CD4-positive, alpha-beta T cell (primary cell): ENCODE measurements at regions of chr7 and their contacts with region 1.

Region 1: DNA sequence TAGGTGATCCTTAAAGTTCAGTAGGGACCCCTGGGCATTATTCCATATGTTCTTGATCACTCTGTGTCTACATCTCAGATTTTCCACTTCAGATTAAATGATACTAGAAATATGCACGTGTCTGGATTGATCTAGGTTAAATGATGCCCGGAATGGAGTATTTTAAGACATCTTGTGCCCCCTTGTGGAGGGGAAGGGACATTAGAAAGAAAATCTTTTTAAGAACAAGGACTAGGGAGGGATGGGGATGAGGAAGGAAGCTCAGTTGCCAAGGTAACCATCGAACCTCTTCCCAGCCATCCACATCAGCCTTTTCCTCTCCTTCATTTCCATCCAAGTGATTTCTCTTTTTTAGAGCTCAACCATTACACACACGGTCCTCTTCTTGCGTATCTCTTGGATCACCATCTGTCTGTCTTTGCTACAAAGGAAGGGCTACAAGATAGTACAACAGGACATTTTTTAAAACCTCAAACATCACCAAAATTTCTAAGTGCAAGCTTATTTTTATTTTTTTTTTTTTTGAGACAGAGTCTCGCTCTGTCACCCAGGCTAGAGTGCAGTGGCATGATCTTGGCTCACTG is 40.5 kb downstream of the PRSS2 start:
- DNase-seq: peak in 4 of 14 experiments; percentile 59 to 87 (median 86)
- ATAC-seq: no peak
- H3K4me3 ChIP-seq: no peak overlapping the region
- H3K4me3 Mint-ChIP-seq: peak overlapping the region; percentile 62
- H3K27ac ChIP-seq: peak overlapping the region; percentile 95 to 99
- H3K27ac Mint-ChIP-seq: peak overlapping the region; percentile 98
- H3K4me1 ChIP-seq: peaks cover 77% of the 10 kb centered on the region
- H3K4me1 Mint-ChIP-seq: peaks cover 99% of the 10 kb centered on the region
- H3K27me3 ChIP-seq: no peaks in the 10 kb centered on the region
- H3K27me3 Mint-ChIP-seq: no peaks in the 10 kb centered on the region
- CTCF ChIP-seq: peak; percentile 78

Region 2: GRCh38 chr7:142384493-142384922 is 426.7 kb before region 1 on chr7:
- CTCF ChIA-PET with region 1: no interaction called
- POLR2A ChIA-PET with region 1: interaction called, 13 read pairs
- intact Hi-C with region 1: no loop called
- DNase-seq: peak in 9 of 14 experiments; percentile 8 to 63 (median 27)
- ATAC-seq: peak; percentile 77
- H3K4me3 ChIP-seq: peak overlapping the region; percentile 20
- H3K4me3 Mint-ChIP-seq: peak overlapping the region; percentile 9
- H3K27ac ChIP-seq: no peak overlapping the region
- H3K27ac Mint-ChIP-seq: peak overlapping the region; percentile 72
- H3K4me1 ChIP-seq: peaks cover 15% of the 10 kb centered on the region
- H3K4me1 Mint-ChIP-seq: peaks cover 26% of the 10 kb centered on the region
- H3K27me3 ChIP-seq: no peaks in the 10 kb centered on the region
- H3K27me3 Mint-ChIP-seq: no peaks in the 10 kb centered on the region
- CTCF ChIP-seq: no peak

Region 3: GRCh38 chr7:142535123-142535779 is 276.0 kb before region 1 on chr7:
- CTCF ChIA-PET with region 1: interaction called, 11 read pairs
- POLR2A ChIA-PET with region 1: interaction called, 23 read pairs
- intact Hi-C with region 1: loop called in 1 of 2 experiments (anchors 2 kb)
- DNase-seq: peak; percentile 35 to 86 (median 66)
- ATAC-seq: peak; percentile 82
- H3K4me3 ChIP-seq: peak overlapping the region; percentile 15
- H3K4me3 Mint-ChIP-seq: peak overlapping the region; percentile 75
- H3K27ac ChIP-seq: peak overlapping the region; percentile 8 to 57
- H3K27ac Mint-ChIP-seq: peak overlapping the region; percentile 77
- H3K4me1 ChIP-seq: peaks cover 19% of the 10 kb centered on the region
- H3K4me1 Mint-ChIP-seq: peaks cover 41% of the 10 kb centered on the region
- H3K27me3 ChIP-seq: no peaks in the 10 kb centered on the region
- H3K27me3 Mint-ChIP-seq: no peaks in the 10 kb centered on the region
- CTCF ChIP-seq: peak; percentile 64

Region 4: DNA sequence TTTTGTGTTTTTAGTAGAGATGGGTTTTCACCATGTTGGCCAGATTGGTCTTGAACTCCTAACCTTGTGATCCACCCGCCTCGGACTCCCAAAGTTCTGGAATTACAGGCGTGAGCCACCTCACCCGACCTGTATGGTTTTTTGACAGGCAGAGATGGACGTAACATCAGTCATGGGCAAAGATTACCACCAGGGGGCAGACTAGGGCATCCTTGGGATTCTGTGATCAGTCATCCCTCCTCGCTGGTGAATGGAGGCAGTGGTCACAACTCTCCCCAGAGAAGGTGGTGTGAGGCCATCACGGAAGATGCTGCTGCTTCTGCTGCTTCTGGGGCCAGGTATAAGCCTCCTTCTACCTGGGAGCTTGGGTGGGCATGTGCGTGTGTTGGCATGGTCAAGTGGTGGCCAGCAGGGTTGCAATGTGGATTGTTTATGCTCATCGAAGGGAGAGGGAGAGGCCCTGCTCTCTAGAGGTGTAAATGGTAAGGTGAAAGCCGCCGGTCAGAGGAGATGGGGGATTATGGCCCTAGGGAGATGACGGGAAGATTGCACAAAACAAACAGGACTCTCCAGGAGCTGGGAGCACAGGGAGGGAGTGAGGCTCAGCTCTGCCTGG is 184.7 kb before region 1 on chr7:
- CTCF ChIA-PET with region 1: interaction called, 4 read pairs
- POLR2A ChIA-PET with region 1: interaction called, 195 read pairs
- intact Hi-C with region 1: no loop called
- DNase-seq: peak; percentile 54 to 82 (median 64)
- ATAC-seq: peak; percentile 94
- H3K4me3 ChIP-seq: peak overlapping the region; percentile 47
- H3K4me3 Mint-ChIP-seq: peak overlapping the region; percentile 89
- H3K27ac ChIP-seq: peak overlapping the region in 1 of 2 donors; percentile 7
- H3K27ac Mint-ChIP-seq: peak overlapping the region; percentile 90
- H3K4me1 ChIP-seq: no peaks in the 10 kb centered on the region
- H3K4me1 Mint-ChIP-seq: peaks cover 8% of the 10 kb centered on the region
- H3K27me3 ChIP-seq: no peaks in the 10 kb centered on the region
- H3K27me3 Mint-ChIP-seq: peaks cover 3% of the 10 kb centered on the region
- CTCF ChIP-seq: peak; percentile 54

Region 5: GRCh38 chr7:142788303-142789289 is 22.6 kb before region 1 on chr7:
- CTCF ChIA-PET with region 1: interaction called, 135 read pairs
- POLR2A ChIA-PET with region 1: interaction called, 5,733 read pairs
- intact Hi-C with region 1: loop called (anchors 1 kb)
- DNase-seq: peak in 5 of 14 experiments; percentile 13 to 45 (median 25)
- ATAC-seq: no peak
- H3K4me3 ChIP-seq: peak overlapping the region; percentile 91
- H3K4me3 Mint-ChIP-seq: peak overlapping the region; percentile 97
- H3K27ac ChIP-seq: peak overlapping the region; percentile 82 to 99
- H3K27ac Mint-ChIP-seq: peak overlapping the region; percentile 98
- H3K4me1 ChIP-seq: peaks cover 37% of the 10 kb centered on the region
- H3K4me1 Mint-ChIP-seq: peaks cover 38% of the 10 kb centered on the region
- H3K27me3 ChIP-seq: no peaks in the 10 kb centered on the region
- H3K27me3 Mint-ChIP-seq: no peaks in the 10 kb centered on the region
- CTCF ChIP-seq: no peak

Region 6: DNA sequence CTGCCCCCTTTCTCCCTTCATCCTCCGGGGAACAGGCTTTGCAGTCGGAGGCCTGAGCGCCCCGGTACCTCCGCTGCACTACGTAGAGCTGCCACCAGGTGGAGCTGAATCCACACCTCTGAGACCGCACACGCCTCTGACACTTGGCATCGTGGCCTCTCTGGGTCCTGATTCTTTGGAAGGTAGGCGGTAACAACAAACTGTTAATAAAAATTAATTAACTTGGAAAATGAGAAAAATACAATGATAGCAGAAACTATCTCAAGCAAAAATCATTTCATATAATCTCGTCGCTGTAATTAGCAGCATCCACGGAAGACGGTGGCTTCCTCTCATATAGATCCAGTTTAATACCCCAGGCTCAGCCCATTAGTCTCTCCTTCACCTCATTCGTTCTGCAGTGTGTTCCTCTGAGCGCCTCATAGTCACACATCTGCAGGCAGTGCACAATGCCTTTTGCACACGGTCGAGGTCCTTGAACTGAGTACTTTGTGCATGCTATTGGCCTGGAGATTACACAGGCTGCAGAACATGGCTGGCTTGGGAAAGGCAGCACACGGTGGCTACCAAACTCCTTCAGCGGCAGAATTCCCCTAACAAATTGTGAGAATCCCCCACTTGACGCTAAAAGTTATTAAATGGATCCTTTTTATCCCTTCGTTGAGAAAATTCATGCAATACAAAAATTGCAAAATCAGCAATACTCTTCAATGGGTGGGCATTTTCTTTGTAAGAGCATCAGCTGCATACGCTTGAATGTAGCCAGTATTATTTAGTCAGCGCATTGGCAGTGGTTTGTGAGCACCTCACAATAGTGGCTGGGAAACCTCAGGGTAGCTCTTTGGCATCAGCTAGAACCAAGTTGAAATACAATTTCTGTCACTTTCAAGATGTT is 197.0 kb after region 1 on chr7:
- CTCF ChIA-PET with region 1: interaction called, 3 read pairs
- POLR2A ChIA-PET with region 1: interaction called, 4 read pairs
- intact Hi-C with region 1: loop called in 1 of 2 experiments (anchors 10 kb)
- DNase-seq: peak; percentile 66 to 91 (median 80)
- ATAC-seq: peak; percentile 96
- H3K4me3 ChIP-seq: no peak overlapping the region
- H3K4me3 Mint-ChIP-seq: no peak overlapping the region
- H3K27ac ChIP-seq: no peak overlapping the region
- H3K27ac Mint-ChIP-seq: no peak overlapping the region
- H3K4me1 ChIP-seq: peaks cover 1% of the 10 kb centered on the region
- H3K4me1 Mint-ChIP-seq: peaks cover 3% of the 10 kb centered on the region
- H3K27me3 ChIP-seq: no peaks in the 10 kb centered on the region
- H3K27me3 Mint-ChIP-seq: peaks cover 4% of the 10 kb centered on the region
- CTCF ChIP-seq: peak; percentile 93